PC-9 (cell line): ENCODE measurements at regions of chr11 and their contacts with region 1.

Region 1: GRCh38 chr11:96037405-96037936 is 113.6 kb upstream of the MTMR2 start:
- DNase-seq: peak; percentile 66 to 100
- H3K4me3 ChIP-seq: peak overlapping the region; percentile 38; the same call in 1 of the 2 replicates
- H3K27ac ChIP-seq: peak overlapping the region; percentile 95
- H3K4me1 ChIP-seq: peaks cover 79% of the 10 kb centered on the region
- H3K27me3 ChIP-seq: no peaks in the 10 kb centered on the region
- CTCF ChIP-seq: no peak

Region 2: GRCh38 chr11:95849087-95849825 is 188.2 kb before region 1 on chr11:
- CTCF ChIA-PET with region 1: no interaction called
- POLR2A ChIA-PET with region 1: interaction called, 6 read pairs
- intact Hi-C with region 1: loop called (anchors 5 kb)
- DNase-seq: peak; percentile 43 to 56
- H3K4me3 ChIP-seq: no peak overlapping the region
- H3K27ac ChIP-seq: peak overlapping the region; percentile 16
- H3K4me1 ChIP-seq: no peaks in the 10 kb centered on the region; the same call in 1 of the 2 replicates
- H3K27me3 ChIP-seq: no peaks in the 10 kb centered on the region
- CTCF ChIP-seq: peak; percentile 64; the same call in 1 of the 2 replicates

Region 3: GRCh38 chr11:95991545-95991944 is 45.9 kb before region 1 on chr11:
- CTCF ChIA-PET with region 1: no interaction called
- POLR2A ChIA-PET with region 1: no interaction called
- intact Hi-C with region 1: loop called (anchors 1 kb)
- DNase-seq: peak in 1 of 2 experiments; percentile 56
- H3K4me3 ChIP-seq: no peak overlapping the region
- H3K27ac ChIP-seq: peak overlapping the region; percentile 75
- H3K4me1 ChIP-seq: peaks cover 30% of the 10 kb centered on the region
- H3K27me3 ChIP-seq: no peaks in the 10 kb centered on the region
- CTCF ChIP-seq: no peak

Region 4: GRCh38 chr11:96062134-96062533 is 24.7 kb after region 1 on chr11:
- CTCF ChIA-PET with region 1: no interaction called
- POLR2A ChIA-PET with region 1: interaction called, 10 read pairs
- intact Hi-C with region 1: no loop called
- DNase-seq: peak in 1 of 2 experiments; percentile 88
- H3K4me3 ChIP-seq: no peak overlapping the region
- H3K27ac ChIP-seq: peak overlapping the region; percentile 66
- H3K4me1 ChIP-seq: peaks cover 45% of the 10 kb centered on the region
- H3K27me3 ChIP-seq: no peaks in the 10 kb centered on the region
- CTCF ChIP-seq: no peak

Region 5: DNA sequence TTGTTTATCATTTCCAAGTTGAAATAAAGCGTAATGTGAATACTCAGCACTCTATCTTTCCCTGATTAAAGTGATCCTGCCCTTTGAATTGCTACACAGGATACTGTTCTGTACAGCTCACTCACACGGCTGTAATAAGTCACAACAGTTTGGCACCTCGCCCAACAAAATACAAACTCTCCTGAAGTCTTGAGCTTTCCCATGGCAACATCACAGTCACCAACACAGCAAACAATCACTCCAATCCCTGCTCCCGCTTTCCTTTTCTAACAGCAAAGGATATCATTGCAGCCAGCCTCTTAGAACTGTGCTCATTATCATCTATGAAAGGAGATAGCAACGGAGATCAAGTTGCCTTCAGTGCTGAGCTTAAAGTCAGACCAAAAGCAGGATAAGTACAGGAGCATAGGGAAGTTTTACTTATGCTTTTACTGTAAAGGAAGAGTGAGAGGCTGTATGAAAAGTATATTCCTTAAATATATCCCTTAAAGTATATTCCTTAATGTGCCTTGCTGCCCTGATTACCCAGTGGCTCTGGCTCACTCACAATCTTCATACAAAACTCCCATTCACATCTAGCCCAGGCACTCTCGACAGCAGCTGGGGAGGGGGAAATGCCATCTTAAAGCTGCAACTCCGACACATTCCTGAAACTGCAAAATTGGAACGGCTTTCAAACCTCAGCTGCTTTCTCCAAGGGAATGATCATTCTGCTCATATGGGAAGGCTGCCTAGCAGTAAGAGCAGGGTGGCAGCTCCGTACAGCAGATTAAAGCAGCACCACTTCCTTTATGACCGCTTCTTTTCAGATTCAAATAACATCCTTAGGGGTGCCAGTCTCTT is 269.7 kb after region 1 on chr11:
- CTCF ChIA-PET with region 1: no interaction called
- POLR2A ChIA-PET with region 1: interaction called, 5 read pairs
- intact Hi-C with region 1: loop called (anchors 5 kb)
- DNase-seq: peak; percentile 84 to 100
- H3K4me3 ChIP-seq: peak overlapping the region; percentile 43
- H3K27ac ChIP-seq: peak overlapping the region; percentile 96
- H3K4me1 ChIP-seq: peaks cover 99% of the 10 kb centered on the region
- H3K27me3 ChIP-seq: no peaks in the 10 kb centered on the region
- CTCF ChIP-seq: no peak